ENCODE measurements at regions of chr19 and their contacts with region 1.

Region 1: DNA sequence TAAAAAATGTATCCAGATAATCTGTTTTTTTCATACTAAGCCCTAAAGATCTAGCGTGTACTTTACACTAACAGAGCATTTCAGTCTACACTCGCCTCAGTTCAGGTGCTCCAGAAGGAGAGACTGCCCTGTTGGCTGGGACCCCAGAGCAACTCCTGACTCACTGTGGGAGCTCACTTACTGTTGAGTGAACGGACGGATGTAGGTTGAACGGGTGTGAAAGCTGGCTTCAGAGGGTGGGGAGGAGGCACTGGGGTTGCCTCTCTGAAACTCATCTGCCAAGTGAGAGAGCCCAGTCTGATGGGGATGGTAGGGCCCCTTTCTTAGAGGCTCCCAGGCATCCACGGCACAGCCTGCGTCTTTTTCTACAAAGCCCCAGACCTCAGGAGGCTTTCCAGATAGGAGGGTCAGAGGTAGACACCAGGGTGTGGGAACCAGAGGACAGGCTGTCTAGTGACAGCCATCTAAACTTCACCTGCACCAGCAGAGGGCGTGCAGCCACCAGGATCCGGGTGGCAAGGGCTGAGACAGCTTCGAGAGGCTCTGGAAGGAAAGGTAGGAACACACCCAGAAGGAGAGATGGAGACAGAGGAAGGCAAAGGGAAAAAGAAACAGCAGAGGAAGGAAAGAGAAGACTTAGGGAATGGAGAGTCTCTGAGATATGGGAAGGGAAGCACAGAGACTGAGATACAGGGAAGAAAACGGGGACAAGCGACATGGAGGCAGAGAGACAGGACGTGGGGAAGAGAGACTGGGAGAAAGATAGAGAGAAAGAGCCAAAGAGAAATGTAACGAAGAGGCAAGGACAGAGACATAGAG is 3.7 kb downstream of the KASH5 start:
- DNase-seq: peak; percentile 87 to 89
- H3K4me3 ChIP-seq: no peak overlapping the region
- H3K4me3 Mint-ChIP-seq: no peak overlapping the region
- H3K27ac Mint-ChIP-seq: no peak overlapping the region
- H3K4me1 ChIP-seq: no peaks in the 10 kb centered on the region
- H3K4me1 Mint-ChIP-seq: peaks cover 12% of the 10 kb centered on the region
- H3K27me3 ChIP-seq: no peaks in the 10 kb centered on the region
- H3K27me3 Mint-ChIP-seq: peaks cover 7% of the 10 kb centered on the region
- CTCF ChIP-seq: peak; percentile 94 to 95

Region 2: GRCh38 chr19:49301165-49301865 is 90.5 kb before region 1 on chr19:
- CTCF ChIA-PET with region 1: no interaction called
- POLR2A ChIA-PET with region 1: no interaction called
- intact Hi-C with region 1: no loop called
- DNase-seq: peak; percentile 72 to 78
- H3K4me3 ChIP-seq: no peak overlapping the region
- H3K4me3 Mint-ChIP-seq: no peak overlapping the region
- H3K27ac Mint-ChIP-seq: no peak overlapping the region
- H3K4me1 ChIP-seq: no peaks in the 10 kb centered on the region
- H3K4me1 Mint-ChIP-seq: no peaks in the 10 kb centered on the region
- H3K27me3 ChIP-seq: no peaks in the 10 kb centered on the region
- H3K27me3 Mint-ChIP-seq: peaks cover 2% of the 10 kb centered on the region
- CTCF ChIP-seq: peak; percentile 87

Region 3: DNA sequence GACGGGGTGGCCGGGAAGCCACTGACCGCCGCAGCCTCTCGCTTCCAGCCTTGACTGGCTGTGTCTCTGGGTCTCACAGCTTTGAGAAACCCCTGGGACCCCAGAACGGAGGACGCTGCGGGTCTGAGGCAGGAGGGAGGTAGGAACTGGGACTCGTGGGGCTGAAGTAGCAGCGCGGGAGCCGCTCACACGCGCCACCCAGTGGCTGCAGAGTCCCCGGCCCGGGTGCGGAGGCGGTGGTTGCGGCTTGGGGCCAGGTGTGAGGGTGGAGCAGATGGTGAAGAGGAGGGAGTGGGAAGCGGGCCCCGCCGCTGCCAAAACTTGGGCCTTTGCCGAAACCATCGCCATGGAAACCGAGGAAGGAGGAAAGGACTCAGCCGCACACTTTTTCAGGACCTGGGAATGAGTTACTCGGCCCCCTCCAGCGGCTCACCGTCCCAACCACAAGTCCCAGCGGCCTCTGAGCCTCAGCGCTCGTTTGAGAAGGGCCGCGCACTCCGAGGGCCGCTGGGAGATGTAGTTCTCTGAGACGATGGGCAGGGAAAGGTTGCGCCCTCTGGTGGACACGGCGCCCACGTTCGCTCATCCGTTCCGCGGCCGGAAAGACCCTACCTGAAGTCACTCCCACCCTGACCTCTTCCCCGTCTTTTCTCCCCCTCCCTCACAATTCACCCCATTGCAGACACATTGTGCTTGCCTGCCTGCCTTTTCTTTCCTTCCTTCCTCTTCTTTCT is 51.7 kb after region 1 on chr19:
- CTCF ChIA-PET with region 1: interaction called, 8 read pairs
- POLR2A ChIA-PET with region 1: no interaction called
- intact Hi-C with region 1: loop called (anchors 1 kb)
- DNase-seq: peak; percentile 95 to 96
- H3K4me3 ChIP-seq: peak overlapping the region; percentile 65
- H3K4me3 Mint-ChIP-seq: peak overlapping the region; percentile 79
- H3K27ac Mint-ChIP-seq: peak overlapping the region; percentile 46
- H3K4me1 ChIP-seq: 0 out of 2 replicates have a peak, but pooled peaks cover 3% of the 10 kb centered on the region
- H3K4me1 Mint-ChIP-seq: peaks cover 23% of the 10 kb centered on the region
- H3K27me3 ChIP-seq: peaks cover 6% of the 10 kb centered on the region
- H3K27me3 Mint-ChIP-seq: peaks cover 29% of the 10 kb centered on the region
- CTCF ChIP-seq: peak; percentile 86 to 94

Measured in Caco-2 (cell line).